GM12878 (cell line): ENCODE measurements at regions of chr2 and their contacts with region 1.

Region 1: DNA sequence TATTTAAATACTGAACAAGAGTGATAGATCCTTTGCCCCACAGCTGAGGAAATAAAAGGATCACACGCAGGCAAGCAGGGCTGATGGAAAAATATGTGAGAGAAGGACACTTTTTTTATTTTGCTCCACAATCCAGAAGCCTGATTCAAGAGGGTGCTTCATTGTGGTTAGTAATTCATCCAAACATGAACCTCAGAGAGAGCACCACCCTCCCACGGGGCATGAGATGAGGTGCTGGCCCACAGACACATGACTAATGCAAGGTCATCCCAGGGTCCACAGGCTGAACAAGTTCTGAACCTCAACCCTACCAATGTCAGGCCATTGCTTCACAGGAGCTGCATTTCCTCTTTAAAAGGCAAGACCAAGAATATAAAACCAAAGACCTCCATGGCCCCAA is 239.6 kb downstream of the MREG start:
- DNase-seq: no peak
- ATAC-seq: no peak
- H3K4me3 ChIP-seq: no peak overlapping the region
- H3K27ac ChIP-seq: no peak overlapping the region
- H3K4me1 ChIP-seq: no peaks in the 10 kb centered on the region
- H3K27me3 ChIP-seq: peaks cover 0 to 3% of the 10 kb centered on the region in 2 experiments; a peak in 1 of 4 replicates
- CTCF ChIP-seq: no peak
- EP300 ChIP-seq: no peak
- POLR2A ChIP-seq: no peak
- RAD21 ChIP-seq: no peak

Region 2: GRCh38 chr2:215787025-215787424 is 13.3 kb after region 1 on chr2:
- CTCF ChIA-PET with region 1: interaction called, 6 read pairs
- POLR2A ChIA-PET with region 1: no interaction called
- RAD21 ChIA-PET with region 1: interaction called, 4 read pairs
- SMC1A ChIA-PET with region 1: interaction called, 13 read pairs
- in situ Hi-C with region 1: no loop called
- intact Hi-C with region 1: no loop called
- DNase-seq: no peak
- ATAC-seq: no peak
- H3K4me3 ChIP-seq: no peak overlapping the region
- H3K27ac ChIP-seq: no peak overlapping the region
- H3K4me1 ChIP-seq: no peaks in the 10 kb centered on the region
- H3K27me3 ChIP-seq: no peaks in the 10 kb centered on the region
- CTCF ChIP-seq: no peak
- EP300 ChIP-seq: no peak
- POLR2A ChIP-seq: no peak
- RAD21 ChIP-seq: no peak

Region 3: DNA sequence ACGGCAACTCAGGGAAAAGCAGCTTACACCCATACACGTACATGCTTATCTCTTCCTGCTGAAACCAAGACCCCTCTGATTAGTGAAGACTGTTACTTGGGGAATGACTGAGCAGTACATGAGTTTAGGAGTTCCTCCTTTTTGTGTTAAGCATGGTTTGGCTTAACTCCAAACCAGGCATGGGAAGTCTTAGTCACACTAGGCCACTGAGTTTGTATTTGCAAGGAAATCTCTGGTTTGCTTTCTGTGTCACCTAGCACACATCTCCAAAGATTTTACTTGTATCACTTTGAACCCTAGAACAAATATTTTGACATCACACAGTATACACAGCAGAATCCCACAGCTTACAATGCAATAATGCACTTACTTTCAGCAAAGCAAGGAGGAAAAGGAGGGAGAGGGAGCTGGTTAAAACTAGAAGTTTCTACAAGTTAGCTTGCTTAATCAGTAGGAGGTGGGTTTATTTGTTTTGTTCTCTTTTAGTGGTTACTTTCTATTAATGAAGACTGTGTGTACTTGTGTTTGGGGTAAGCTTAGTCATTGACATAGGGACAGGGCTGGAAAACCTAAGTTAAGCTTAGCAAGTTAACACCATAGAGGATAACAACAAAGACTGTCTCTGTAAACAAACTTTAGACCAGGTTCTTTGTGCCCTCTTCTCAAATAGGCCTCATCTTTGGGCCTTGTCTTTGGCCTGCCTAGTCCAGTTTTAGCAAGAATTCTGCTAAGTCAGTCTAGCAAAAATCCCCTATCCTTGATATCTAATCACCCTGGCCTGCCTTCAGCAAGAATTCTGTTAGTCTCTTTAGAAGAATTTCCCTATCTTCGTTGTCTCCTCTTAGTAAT is 20.2 kb after region 1 on chr2:
- CTCF ChIA-PET with region 1: interaction called, 4 read pairs
- POLR2A ChIA-PET with region 1: interaction called, 3 read pairs
- RAD21 ChIA-PET with region 1: interaction called, 4 read pairs
- SMC1A ChIA-PET with region 1: interaction called, 11 read pairs
- in situ Hi-C with region 1: no loop called
- intact Hi-C with region 1: no loop called
- DNase-seq: peak; percentile 56
- ATAC-seq: peak; percentile 67
- H3K4me3 ChIP-seq: no peak overlapping the region
- H3K27ac ChIP-seq: no peak overlapping the region
- H3K4me1 ChIP-seq: peaks cover 5% of the 10 kb centered on the region; the same call in 1 of the 2 replicates
- H3K27me3 ChIP-seq: no peaks in the 10 kb centered on the region
- CTCF ChIP-seq: no peak
- EP300 ChIP-seq: no peak
- POLR2A ChIP-seq: no peak
- RAD21 ChIP-seq: no peak